CD4-positive, alpha-beta memory T cell (primary cell): ENCODE measurements at regions of chr6 and their contacts with region 1.

Region 1: DNA sequence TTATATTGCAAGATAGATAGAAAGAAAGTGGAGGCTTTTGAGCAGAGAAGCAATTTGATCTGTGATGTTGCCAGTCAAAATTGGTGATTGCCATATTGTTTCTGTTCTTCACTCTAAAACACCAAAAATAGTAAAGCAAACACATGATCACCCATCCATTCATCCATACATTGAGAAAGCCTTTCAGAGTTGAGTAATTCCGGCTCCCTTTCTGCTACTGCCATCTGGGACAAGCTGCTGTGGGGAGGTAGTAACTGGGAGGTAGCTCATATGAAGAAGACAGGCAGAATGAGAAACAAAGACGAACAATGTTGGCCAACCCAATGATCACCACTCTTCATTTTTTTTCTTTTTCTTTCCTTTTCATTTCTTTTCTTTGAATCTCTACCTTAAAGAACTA is 51.1 kb upstream of the HBS1L start:
- DNase-seq: no peak
- H3K4me3 ChIP-seq: no peak overlapping the region
- H3K4me3 Mint-ChIP-seq: no peak overlapping the region
- H3K27ac ChIP-seq: no peak overlapping the region
- H3K27ac Mint-ChIP-seq: no peak overlapping the region
- H3K4me1 ChIP-seq: peaks cover 36% of the 10 kb centered on the region
- H3K4me1 Mint-ChIP-seq: peaks cover 24 to 42% (median 29%) of the 10 kb centered on the region in 4 donors
- H3K27me3 ChIP-seq: no peaks in the 10 kb centered on the region
- H3K27me3 Mint-ChIP-seq: no peaks in the 10 kb centered on the region

Region 2: GRCh38 chr6:135054569-135055498 is 50.9 kb before region 1 on chr6 and contains the start of gene HBS1L:
- CTCF ChIA-PET with region 1: interaction called, 5 read pairs
- POLR2A ChIA-PET with region 1: interaction called, 19 read pairs
- intact Hi-C with region 1: loop called (anchors 2 kb)
- DNase-seq: peak; percentile 95 to 97 (median 96)
- H3K4me3 ChIP-seq: peak within 1 kb of the TSS; percentile 54 to 91
- H3K4me3 Mint-ChIP-seq: peak within 1 kb of the TSS; percentile 93 to 99 (median 97)
- H3K27ac ChIP-seq: peak within 1 kb of the TSS; percentile 91
- H3K27ac Mint-ChIP-seq: peak within 1 kb of the TSS; percentile 96 to 99 (median 99)
- H3K4me1 ChIP-seq: peaks cover 37% of the 10 kb centered on the region
- H3K4me1 Mint-ChIP-seq: peaks cover 27 to 44% (median 37%) of the 10 kb centered on the region in 4 donors
- H3K27me3 ChIP-seq: no peaks in the 10 kb centered on the region
- H3K27me3 Mint-ChIP-seq: no peaks in the 10 kb centered on the region
- total RNA-seq, gene HBS1L: 63.8 to 69.9 TPM

Region 3: GRCh38 chr6:135750081-135750480 is 644.4 kb after region 1 on chr6:
- CTCF ChIA-PET with region 1: no interaction called
- POLR2A ChIA-PET with region 1: no interaction called
- intact Hi-C with region 1: no loop called
- DNase-seq: no peak
- H3K4me3 ChIP-seq: no peak overlapping the region
- H3K4me3 Mint-ChIP-seq: no peak overlapping the region
- H3K27ac ChIP-seq: no peak overlapping the region
- H3K27ac Mint-ChIP-seq: no peak overlapping the region
- H3K4me1 ChIP-seq: no peaks in the 10 kb centered on the region
- H3K4me1 Mint-ChIP-seq: no peaks in the 10 kb centered on the region
- H3K27me3 ChIP-seq: no peaks in the 10 kb centered on the region
- H3K27me3 Mint-ChIP-seq: peaks cover 2 to 3% of the 10 kb centered on the region in 2 donors